Activated CD4-positive, alpha-beta T cell treated with anti-CD3 and anti-CD28 coated beads for 36 hours (primary cell): ENCODE measurements at regions of chr21 and their contacts with region 1.

Region 1: DNA sequence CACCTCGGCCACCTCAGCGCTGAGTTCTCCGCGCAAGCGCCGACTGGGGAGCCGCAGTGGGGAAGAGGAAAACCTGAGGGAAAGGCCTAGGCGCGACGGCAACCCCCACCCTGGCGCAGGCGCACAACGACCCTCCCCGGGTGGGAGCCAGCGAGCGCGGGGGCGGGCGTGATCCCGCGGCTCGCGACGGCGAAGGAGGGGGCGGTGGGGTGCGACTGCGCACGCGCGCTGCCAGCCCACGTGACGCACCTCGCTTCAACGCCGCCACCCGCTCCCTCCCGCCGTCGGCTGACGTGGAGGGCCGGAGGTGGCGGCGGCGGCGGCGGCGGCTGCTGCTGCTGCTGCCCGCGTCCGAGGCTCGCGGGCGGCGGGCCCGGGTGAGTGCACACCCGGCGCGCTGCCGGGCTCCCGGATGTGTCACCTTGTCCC is at the starts of genes PIGP and TTC3:
- DNase-seq: peak; percentile 97
- ATAC-seq: peak; percentile 74
- H3K4me3 Mint-ChIP-seq: peak within 1 kb of the TSS; percentile 99
- H3K27ac Mint-ChIP-seq: peak within 1 kb of the TSS; percentile 92
- H3K4me1 Mint-ChIP-seq: peaks cover 48% of the 10 kb centered on the region
- H3K27me3 Mint-ChIP-seq: no peaks in the 10 kb centered on the region
- total RNA-seq, gene PIGP: 32.8 to 41.0 TPM
- total RNA-seq, gene TTC3: 65.1 to 78.9 TPM

Region 2: DNA sequence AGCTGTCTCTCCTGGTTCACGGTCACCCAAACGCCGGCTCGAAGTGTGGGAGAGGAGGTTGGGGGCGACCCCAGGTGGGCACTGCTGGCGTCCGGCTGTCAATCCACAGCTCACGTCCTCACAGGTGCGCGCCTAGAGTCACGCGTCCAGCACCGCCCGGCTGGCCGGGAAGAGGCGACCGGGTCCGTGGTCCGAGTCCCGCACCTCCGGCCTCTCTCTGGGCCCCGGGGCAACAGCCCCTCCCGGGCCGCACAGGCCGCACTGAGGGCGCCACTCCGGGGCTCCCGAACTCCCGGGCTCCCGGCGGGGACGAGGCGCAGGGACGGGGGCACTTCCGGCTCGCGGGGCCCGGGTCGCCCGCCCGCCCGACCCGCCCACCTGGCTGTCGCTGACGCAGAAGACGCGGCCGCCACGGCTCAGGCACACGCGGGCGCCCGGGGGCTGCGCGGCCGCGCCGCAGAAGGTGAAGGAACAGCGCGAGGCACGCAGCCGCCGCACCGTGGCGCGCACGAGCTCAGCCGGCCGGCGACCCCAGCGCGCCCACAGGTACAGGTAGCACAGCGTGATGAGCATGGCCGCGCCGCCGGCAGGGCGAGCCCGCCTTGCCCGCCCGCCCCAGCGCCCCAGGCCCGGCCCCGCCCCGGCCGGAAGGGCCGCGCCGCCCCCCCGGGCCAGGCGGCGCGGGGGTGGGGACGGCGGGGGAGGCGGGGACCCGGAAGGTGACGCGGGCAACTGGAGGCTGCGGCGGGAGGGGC is 106.8 kb before region 1 on chr21 and contains the start of gene HLCS:
- CTCF ChIA-PET with region 1: no interaction called
- POLR2A ChIA-PET with region 1: no interaction called
- intact Hi-C with region 1: loop called in 1 of 2 experiments (anchors 1 kb)
- DNase-seq: peak; percentile 84
- ATAC-seq: peak; percentile 90
- H3K4me3 Mint-ChIP-seq: peak within 1 kb of the TSS; percentile 73
- H3K27ac Mint-ChIP-seq: peak within 1 kb of the TSS; percentile 88
- H3K4me1 Mint-ChIP-seq: peaks cover 9% of the 10 kb centered on the region
- H3K27me3 Mint-ChIP-seq: no peaks in the 10 kb centered on the region
- total RNA-seq, gene HLCS: 14.3 to 15.0 TPM

Region 3: GRCh38 chr21:37220981-37221664 is 148.1 kb after region 1 on chr21:
- CTCF ChIA-PET with region 1: no interaction called
- POLR2A ChIA-PET with region 1: no interaction called
- intact Hi-C with region 1: loop called in 1 of 2 experiments (anchors 1 kb)
- DNase-seq: peak; percentile 98
- ATAC-seq: peak; percentile 84
- H3K4me3 Mint-ChIP-seq: peak overlapping the region; percentile 82
- H3K27ac Mint-ChIP-seq: peak overlapping the region; percentile 97
- H3K4me1 Mint-ChIP-seq: peaks cover 47% of the 10 kb centered on the region
- H3K27me3 Mint-ChIP-seq: no peaks in the 10 kb centered on the region

Region 4: GRCh38 chr21:37267269-37268184 is 194.5 kb after region 1 on chr21 and contains the start of gene VPS26C:
- CTCF ChIA-PET with region 1: interaction called, 4 read pairs
- POLR2A ChIA-PET with region 1: interaction called, 4 read pairs
- intact Hi-C with region 1: loop called (anchors 1 to 5 kb)
- DNase-seq: peak; percentile 99
- ATAC-seq: peak; percentile 92
- H3K4me3 Mint-ChIP-seq: peak within 1 kb of the TSS; percentile 84
- H3K27ac Mint-ChIP-seq: peak within 1 kb of the TSS; percentile 99
- H3K4me1 Mint-ChIP-seq: peaks cover 28% of the 10 kb centered on the region
- H3K27me3 Mint-ChIP-seq: no peaks in the 10 kb centered on the region
- total RNA-seq, gene VPS26C: 54.8 to 61.7 TPM

Region 5: DNA sequence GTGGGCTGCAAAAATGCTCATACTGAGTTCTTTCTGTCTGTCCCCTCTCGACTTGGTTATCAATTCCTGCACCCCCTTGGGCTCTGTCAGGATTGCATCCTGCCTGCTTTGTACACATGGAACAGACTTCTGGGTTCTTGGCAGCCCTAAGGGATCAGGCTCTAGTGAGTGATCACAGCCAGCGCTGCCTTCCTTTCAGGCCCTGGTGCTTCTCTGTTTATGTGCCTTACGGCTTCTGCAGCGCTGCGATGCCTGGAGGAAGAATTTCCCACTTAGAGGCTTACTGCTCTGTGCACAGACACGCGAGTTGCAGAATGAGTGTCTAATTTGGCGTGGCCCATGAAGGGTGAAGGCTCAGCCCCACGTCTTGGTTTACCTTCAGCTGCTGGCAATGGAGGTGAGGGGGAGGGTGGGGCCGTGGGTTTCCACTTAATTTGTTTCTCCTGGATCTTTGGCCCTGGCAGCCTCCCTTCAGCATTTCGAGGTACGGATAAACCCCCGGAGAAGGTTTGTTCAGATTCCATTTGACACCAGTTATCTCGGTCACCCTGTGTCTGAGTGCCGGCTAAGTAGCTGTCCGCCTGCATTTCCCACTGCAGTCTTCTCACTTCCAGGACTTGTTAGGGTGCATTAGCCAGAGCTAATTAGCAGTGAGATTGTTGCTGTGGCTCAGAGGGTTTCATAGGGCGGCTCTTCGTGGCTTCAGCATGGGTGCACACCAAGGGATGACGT is 520.9 kb after region 1 on chr21:
- CTCF ChIA-PET with region 1: no interaction called
- POLR2A ChIA-PET with region 1: no interaction called
- intact Hi-C with region 1: no loop called
- DNase-seq: no peak
- ATAC-seq: no peak
- H3K4me3 Mint-ChIP-seq: no peak overlapping the region
- H3K27ac Mint-ChIP-seq: no peak overlapping the region
- H3K4me1 Mint-ChIP-seq: no peaks in the 10 kb centered on the region
- H3K27me3 Mint-ChIP-seq: peaks cover 8% of the 10 kb centered on the region